ENCODE measurements at regions of chr14 and their contacts with region 1.

Region 1: DNA sequence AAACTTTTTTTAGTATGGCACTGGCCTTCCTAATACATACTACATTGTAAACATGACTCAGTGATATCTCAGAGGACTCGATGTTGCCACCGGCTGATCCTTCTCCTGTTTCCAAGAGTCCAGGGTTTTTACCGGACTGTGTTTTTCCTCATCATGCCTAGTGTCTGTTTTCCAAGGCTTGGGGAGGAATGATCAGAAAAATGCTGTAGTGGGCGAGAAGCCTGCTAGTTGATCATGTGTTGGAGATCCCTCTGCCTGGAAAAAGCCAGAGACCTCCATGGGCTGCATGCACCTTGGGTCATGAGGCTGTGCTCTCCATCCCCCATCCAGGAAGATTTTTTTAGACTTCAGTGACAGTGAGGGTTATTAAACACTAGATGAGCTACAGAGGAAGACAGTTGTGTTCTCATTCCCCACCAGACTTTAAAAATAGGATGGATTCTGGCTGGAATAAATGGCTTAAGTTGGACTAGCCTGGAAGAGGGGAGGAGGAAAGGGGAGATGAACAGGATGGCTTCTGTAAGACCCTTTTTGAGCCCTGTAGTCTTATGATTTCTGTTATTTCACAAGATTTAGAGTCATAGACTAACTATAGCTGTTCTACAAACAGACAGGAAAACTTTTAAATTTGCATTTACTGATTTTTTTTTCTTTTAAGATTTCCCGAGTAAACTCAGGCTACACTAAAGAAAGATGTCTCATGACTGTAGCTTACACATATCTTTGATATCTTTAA is 145.7 kb downstream of the SAMD4A start:
- DNase-seq: no peak
- ATAC-seq: no peak
- H3K4me3 ChIP-seq: no peak overlapping the region
- H3K27ac ChIP-seq: peak overlapping the region; percentile 34 to 55
- H3K4me1 ChIP-seq: peaks cover 12 to 14% of the 10 kb centered on the region in 2 donors
- H3K27me3 ChIP-seq: no peaks in the 10 kb centered on the region
- CTCF ChIP-seq: no peak

Region 2: DNA sequence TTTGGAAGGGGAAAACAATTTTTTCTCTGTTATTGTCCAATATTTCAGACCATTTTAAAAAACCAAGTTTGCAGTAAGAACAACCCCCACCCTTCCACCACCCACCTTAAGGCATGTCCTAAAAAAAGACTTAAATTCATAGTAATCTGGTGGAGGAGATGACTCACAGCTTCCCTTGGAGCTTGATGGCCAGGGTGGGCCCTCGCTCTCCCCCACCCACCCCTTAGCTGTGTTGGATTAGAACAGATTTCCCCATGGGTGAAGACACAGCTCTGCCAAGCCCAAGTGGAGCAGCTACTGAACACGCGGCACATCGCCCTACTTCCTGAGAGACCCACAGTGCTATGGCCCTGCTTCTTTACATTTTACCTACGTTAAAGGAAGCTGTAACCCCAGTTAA is 49.7 kb after region 1 on chr14:
- intact Hi-C with region 1: loop called in 1 of 2 experiments (anchors 10 kb)
- DNase-seq: no peak
- ATAC-seq: no peak
- H3K4me3 ChIP-seq: no peak overlapping the region
- H3K27ac ChIP-seq: no peak overlapping the region
- H3K4me1 ChIP-seq: no peaks in the 10 kb centered on the region
- H3K27me3 ChIP-seq: no peaks in the 10 kb centered on the region
- CTCF ChIP-seq: no peak

Region 3: GRCh38 chr14:54829455-54830224 is 117.0 kb after region 1 on chr14:
- intact Hi-C with region 1: no loop called
- DNase-seq: no peak
- ATAC-seq: no peak
- H3K4me3 ChIP-seq: no peak overlapping the region
- H3K27ac ChIP-seq: no peak overlapping the region
- H3K4me1 ChIP-seq: no peaks in the 10 kb centered on the region
- H3K27me3 ChIP-seq: no peaks in the 10 kb centered on the region
- CTCF ChIP-seq: no peak